Astrocyte of the cerebellum (primary cell): ENCODE measurements at regions of chr5 and their contacts with region 1.

Region 1: DNA sequence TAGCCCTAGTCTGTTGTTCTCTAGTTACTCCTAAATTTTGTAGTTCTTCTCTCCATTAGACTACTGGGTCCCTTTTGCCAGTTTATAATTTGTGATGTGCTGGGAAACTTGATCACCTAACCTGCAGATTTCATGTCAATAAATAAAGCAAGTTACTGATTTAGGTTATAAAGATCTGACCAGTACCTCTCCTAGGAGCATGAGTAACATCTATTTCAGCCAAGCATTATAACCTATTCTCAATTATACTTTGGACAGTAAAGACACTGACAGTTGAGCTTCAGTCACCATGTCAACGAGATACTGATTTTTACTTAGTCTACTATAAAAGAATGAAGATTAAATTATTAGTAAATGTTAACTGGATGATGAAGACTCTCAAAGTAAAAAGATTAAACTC is 36.7 kb downstream of the CSNK1A1 start:
- DNase-seq: no peak
- H3K4me3 ChIP-seq: no peak overlapping the region
- CTCF ChIP-seq: no peak

Region 2: DNA sequence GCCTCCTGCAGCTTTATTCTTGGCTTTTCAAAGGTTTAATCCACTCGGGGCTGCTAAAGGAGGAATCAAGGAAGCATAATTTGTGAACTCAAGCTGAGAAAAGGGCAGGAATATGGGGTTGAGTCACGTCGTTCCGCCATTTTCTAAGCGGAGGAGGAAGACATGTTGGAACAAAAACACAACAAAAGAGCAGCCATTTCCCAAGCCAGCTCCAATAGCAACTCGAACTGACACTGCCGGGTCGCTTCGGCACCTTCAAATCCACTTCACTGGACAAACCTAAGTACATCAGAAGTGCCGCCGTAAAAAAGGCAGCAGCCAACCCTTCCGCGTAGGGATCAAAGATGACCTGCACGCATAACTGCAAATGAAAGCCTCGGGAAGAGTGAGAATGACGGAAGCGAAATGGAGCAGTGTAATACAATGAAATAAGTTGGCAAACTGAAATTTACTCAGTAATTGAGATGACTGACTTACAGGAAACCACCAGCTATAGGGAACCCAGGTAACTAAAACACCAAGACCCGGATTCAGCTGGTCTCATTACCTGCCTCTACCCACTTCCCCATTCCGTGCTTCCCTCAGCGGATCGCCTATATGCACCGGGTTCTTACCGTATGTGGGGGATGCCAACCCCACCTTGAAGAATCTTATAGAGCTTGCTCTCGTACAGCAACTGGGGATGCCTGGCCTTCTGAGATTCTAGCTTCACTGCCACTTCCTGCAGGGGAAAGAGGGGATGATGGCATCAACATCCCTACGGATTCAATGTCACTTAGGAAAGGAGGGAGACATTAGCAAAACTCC is 35.2 kb after region 1 on chr5:
- in situ Hi-C with region 1: loop called (anchors 5 kb)
- DNase-seq: no peak
- H3K4me3 ChIP-seq: peak overlapping the region; percentile 100
- CTCF ChIP-seq: no peak

Region 3: GRCh38 chr5:149932445-149933350 is 418.2 kb after region 1 on chr5:
- in situ Hi-C with region 1: no loop called
- DNase-seq: no peak
- H3K4me3 ChIP-seq: no peak overlapping the region
- CTCF ChIP-seq: peak; percentile 39